HepG2 (cell line): ENCODE measurements at regions of chr17 and their contacts with region 1.

Region 1: GRCh38 chr17:35969558-35970380 is 11.5 kb downstream of the CCL16 start:
- DNase-seq: peak; percentile 82
- ATAC-seq: peak; percentile 36
- H3K4me3 ChIP-seq: peak overlapping the region in 1 of 3 experiments; percentile 15; a peak in 2 of 6 replicates
- H3K27ac ChIP-seq: no peak overlapping the region
- H3K4me1 ChIP-seq: peaks cover 69% of the 10 kb centered on the region
- H3K27me3 ChIP-seq: no peaks in the 10 kb centered on the region
- CTCF ChIP-seq: peak; percentile 94
- EP300 ChIP-seq: no peak
- POLR2A ChIP-seq: no peak
- RAD21 ChIP-seq: peak; percentile 92

Region 2: GRCh38 chr17:35991075-35991474 is 21.3 kb after region 1 on chr17:
- CTCF ChIA-PET with region 1: no interaction called
- POLR2A ChIA-PET with region 1: interaction called, 12 read pairs
- in situ Hi-C with region 1: no loop called
- intact Hi-C with region 1: no loop called
- DNase-seq: peak; percentile 71
- ATAC-seq: peak; percentile 86
- H3K4me3 ChIP-seq: no peak overlapping the region
- H3K27ac ChIP-seq: peak overlapping the region; percentile 72
- H3K4me1 ChIP-seq: peaks cover 58% of the 10 kb centered on the region
- H3K27me3 ChIP-seq: no peaks in the 10 kb centered on the region
- CTCF ChIP-seq: no peak
- EP300 ChIP-seq: peak in 1 of 2 experiments; percentile 33; a peak in 2 of 4 replicates
- POLR2A ChIP-seq: no peak
- RAD21 ChIP-seq: no peak

Region 3: GRCh38 chr17:36008998-36009665 is 39.4 kb after region 1 on chr17:
- CTCF ChIA-PET with region 1: interaction called, 34 read pairs
- POLR2A ChIA-PET with region 1: interaction called, 41 read pairs
- in situ Hi-C with region 1: loop called (anchors 5 kb)
- intact Hi-C with region 1: loop called (anchors 1 kb)
- DNase-seq: peak; percentile 48
- ATAC-seq: peak; percentile 91
- H3K4me3 ChIP-seq: no peak overlapping the region
- H3K27ac ChIP-seq: no peak overlapping the region
- H3K4me1 ChIP-seq: peaks cover 49% of the 10 kb centered on the region
- H3K27me3 ChIP-seq: no peaks in the 10 kb centered on the region
- CTCF ChIP-seq: peak; percentile 71
- EP300 ChIP-seq: no peak
- POLR2A ChIP-seq: no peak
- RAD21 ChIP-seq: peak; percentile 80

Region 4: GRCh38 chr17:36148559-36149295 is 179.0 kb after region 1 on chr17:
- CTCF ChIA-PET with region 1: interaction called, 38 read pairs
- POLR2A ChIA-PET with region 1: interaction called, 5 read pairs
- in situ Hi-C with region 1: loop called (anchors 5 kb)
- intact Hi-C with region 1: loop called (anchors 1 kb)
- DNase-seq: peak; percentile 28
- ATAC-seq: peak; percentile 90
- H3K4me3 ChIP-seq: no peak overlapping the region
- H3K27ac ChIP-seq: no peak overlapping the region
- H3K4me1 ChIP-seq: 0 out of 2 replicates have a peak, but pooled peaks cover 8% of the 10 kb centered on the region
- H3K27me3 ChIP-seq: no peaks in the 10 kb centered on the region; a peak in 2 of 5 replicates
- CTCF ChIP-seq: peak; percentile 93
- EP300 ChIP-seq: no peak
- POLR2A ChIP-seq: no peak
- RAD21 ChIP-seq: peak; percentile 86